PC-3 (cell line): ENCODE measurements at regions of chr1 and their contacts with region 1.

Region 1: GRCh38 chr1:187665483-187665882 is 836.7 kb downstream of the PLA2G4A start:
- DNase-seq: no peak
- ATAC-seq: no peak
- H3K4me3 ChIP-seq: no peak overlapping the region
- H3K27ac ChIP-seq: no peak overlapping the region
- H3K4me1 ChIP-seq: no peaks in the 10 kb centered on the region
- H3K27me3 ChIP-seq: no peaks in the 10 kb centered on the region
- CTCF ChIP-seq: no peak

Region 2: DNA sequence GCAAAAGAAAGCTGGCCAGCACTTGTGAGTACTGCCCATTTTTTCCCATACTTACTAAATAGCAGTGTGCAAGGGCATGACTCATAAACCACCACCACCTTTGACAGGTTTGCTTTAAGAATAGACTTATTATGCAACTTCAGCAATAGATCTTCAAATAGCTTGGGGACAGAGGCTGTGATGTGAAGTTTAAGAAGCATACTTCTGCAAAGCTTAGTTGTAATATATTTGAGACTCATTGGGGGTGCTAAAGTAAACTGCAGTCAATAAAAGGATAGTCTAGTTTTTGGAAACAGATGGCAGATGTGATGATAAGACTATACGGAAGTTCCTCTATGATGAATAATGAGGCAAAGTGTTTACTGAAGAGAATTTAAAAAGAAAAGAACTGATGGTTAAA is 626.7 kb before region 1 on chr1:
- CTCF ChIA-PET with region 1: no interaction called
- POLR2A ChIA-PET with region 1: no interaction called
- intact Hi-C with region 1: no loop called
- DNase-seq: peak; percentile 77
- ATAC-seq: peak; percentile 87
- H3K4me3 ChIP-seq: no peak overlapping the region
- H3K27ac ChIP-seq: peak overlapping the region; percentile 66
- H3K4me1 ChIP-seq: peaks cover 24% of the 10 kb centered on the region
- H3K27me3 ChIP-seq: no peaks in the 10 kb centered on the region
- CTCF ChIP-seq: no peak

Region 3: DNA sequence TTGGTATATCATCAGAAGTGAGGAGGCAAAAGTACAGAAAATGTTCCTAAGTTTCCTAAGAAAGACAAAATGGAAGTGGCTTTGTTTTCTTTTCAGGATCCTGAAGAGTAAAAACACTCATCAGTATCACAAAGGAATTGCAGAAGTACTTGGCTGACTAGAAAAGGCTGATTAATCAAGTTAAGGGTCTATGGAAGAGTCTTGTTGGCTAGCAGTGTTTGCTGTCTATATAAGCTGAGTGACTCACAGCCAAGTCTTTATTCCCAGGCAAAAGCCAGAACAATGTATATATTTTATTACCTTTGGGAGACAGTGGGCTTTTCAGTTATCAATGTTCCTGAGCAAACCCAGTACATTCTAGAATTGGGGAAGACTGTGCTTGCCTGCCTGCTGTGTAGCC is 59.7 kb before region 1 on chr1:
- CTCF ChIA-PET with region 1: no interaction called
- POLR2A ChIA-PET with region 1: no interaction called
- intact Hi-C with region 1: no loop called
- DNase-seq: peak; percentile 49
- ATAC-seq: peak; percentile 56; the same call in 1 of the 2 replicates
- H3K4me3 ChIP-seq: no peak overlapping the region
- H3K27ac ChIP-seq: no peak overlapping the region
- H3K4me1 ChIP-seq: peaks cover 8% of the 10 kb centered on the region
- H3K27me3 ChIP-seq: no peaks in the 10 kb centered on the region
- CTCF ChIP-seq: no peak

Region 4: DNA sequence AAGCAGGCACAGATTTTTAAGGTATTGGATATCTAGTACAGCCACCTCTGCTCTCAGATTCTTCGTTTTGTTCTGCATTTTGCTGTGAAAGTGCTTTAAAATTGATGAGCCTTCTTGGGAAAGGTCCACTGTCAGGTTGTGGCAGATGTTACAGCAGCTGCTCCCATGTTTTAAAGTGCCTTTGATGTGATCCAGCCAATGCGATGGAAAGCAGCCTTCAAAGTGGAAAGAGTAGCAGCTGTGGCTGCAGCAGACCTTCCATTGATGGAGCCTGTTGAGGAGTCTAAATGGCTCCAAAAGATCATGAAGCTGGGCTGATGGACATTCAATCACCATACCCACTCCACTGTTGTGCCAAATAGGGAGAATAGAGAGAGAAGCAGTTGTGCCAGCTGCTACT is 19.8 kb before region 1 on chr1:
- CTCF ChIA-PET with region 1: no interaction called
- POLR2A ChIA-PET with region 1: interaction called, 35 read pairs
- intact Hi-C with region 1: no loop called
- DNase-seq: no peak
- ATAC-seq: no peak
- H3K4me3 ChIP-seq: no peak overlapping the region
- H3K27ac ChIP-seq: no peak overlapping the region
- H3K4me1 ChIP-seq: no peaks in the 10 kb centered on the region
- H3K27me3 ChIP-seq: no peaks in the 10 kb centered on the region
- CTCF ChIP-seq: no peak